Heart left ventricle (tissue), 16 donors: ENCODE measurements at regions of chr22 and their contacts with region 1.

Region 1: GRCh38 chr22:30634471-30635233 is 929 bp upstream of the SLC35E4 start:
- DNase-seq: peak; percentile 83 to 93 (median 85)
- ATAC-seq: peak; percentile 65 to 82 (median 74)
- H3K4me3 ChIP-seq: peak overlapping the region in 11 of 12 donors; percentile 6 to 90 (median 77)
- H3K27ac ChIP-seq: peak overlapping the region; percentile 23 to 98 (median 88)
- H3K4me1 ChIP-seq: peaks cover 0 to 37% (median 27%) of the 10 kb centered on the region in 12 donors
- H3K27me3 ChIP-seq: no peaks in the 10 kb centered on the region
- CTCF ChIP-seq: peak; percentile 91 to 96 (median 94)
- POLR2A ChIP-seq: no peak

Region 2: DNA sequence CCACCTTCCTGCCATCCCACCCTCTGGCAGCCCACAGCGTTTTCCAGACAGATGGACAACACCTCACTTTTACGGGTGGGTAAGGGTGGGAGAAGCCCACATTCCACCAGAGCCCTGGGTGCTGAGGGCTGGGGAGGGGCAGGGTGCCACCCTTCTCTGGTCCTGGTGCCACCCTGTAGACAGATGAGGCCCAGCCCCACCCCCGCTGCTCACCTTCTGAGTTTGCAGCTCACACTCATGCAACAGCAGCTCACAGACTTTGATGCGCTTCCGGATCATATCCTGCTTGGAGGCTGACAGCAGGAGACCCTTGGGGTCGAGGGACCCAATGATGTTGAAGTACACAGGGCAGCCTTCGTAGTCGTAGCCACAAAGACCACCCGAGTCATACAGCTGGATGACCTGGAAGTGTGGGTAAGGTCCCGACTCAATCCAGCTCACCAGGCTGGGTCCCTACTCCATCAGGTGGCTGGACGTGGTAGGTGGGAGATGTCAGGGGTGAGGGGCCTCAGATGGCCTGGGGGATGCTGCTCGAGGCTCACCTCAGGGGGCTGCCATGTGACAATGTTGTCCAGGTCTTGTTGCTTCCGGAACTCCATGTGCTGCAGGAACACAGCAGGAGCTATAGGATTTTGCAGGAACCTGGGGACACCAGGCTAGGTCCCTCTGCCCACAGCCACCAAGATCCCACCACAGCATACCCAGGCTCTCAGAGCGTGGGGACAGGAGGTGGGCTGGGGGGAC is 139.4 kb before region 1 on chr22:
- intact Hi-C with region 1: no loop called
- DNase-seq: peak in 1 of 5 donors; percentile 46
- ATAC-seq: no peak
- H3K4me3 ChIP-seq: no peak overlapping the region
- H3K27ac ChIP-seq: no peak overlapping the region
- H3K4me1 ChIP-seq: no peaks in the 10 kb centered on the region
- H3K27me3 ChIP-seq: peaks cover 0 to 20% (median 0%) of the 10 kb centered on the region in 9 donors
- CTCF ChIP-seq: no peak
- POLR2A ChIP-seq: no peak

Region 3: GRCh38 chr22:30591588-30592359 is 42.9 kb before region 1 on chr22 and contains the start of gene PES1:
- intact Hi-C with region 1: loop called in 1 of 10 experiments (anchors 2 kb)
- DNase-seq: peak; percentile 94 to 97 (median 96)
- ATAC-seq: peak; percentile 100
- H3K4me3 ChIP-seq: peak within 1 kb of the TSS; percentile 59 to 95 (median 82)
- H3K27ac ChIP-seq: peak within 1 kb of the TSS; percentile 43 to 91 (median 81)
- H3K4me1 ChIP-seq: peaks cover 0 to 23% (median 15%) of the 10 kb centered on the region in 12 donors
- H3K27me3 ChIP-seq: no peaks in the 10 kb centered on the region
- CTCF ChIP-seq: no peak
- POLR2A ChIP-seq: peak in 1 of 2 donors; percentile 45
- total RNA-seq, gene PES1: 15.7 to 39.8 (median 27.8) TPM

Region 4: GRCh38 chr22:30675436-30675835 is 40.8 kb after region 1 on chr22:
- intact Hi-C with region 1: loop called in 2 of 10 experiments (anchors 5 kb)
- DNase-seq: no peak
- ATAC-seq: no peak
- H3K4me3 ChIP-seq: no peak overlapping the region
- H3K27ac ChIP-seq: no peak overlapping the region
- H3K4me1 ChIP-seq: peaks cover 0 to 1% (median 0%) of the 10 kb centered on the region in 12 donors
- H3K27me3 ChIP-seq: peaks cover 0 to 14% (median 0%) of the 10 kb centered on the region in 9 donors
- CTCF ChIP-seq: no peak
- POLR2A ChIP-seq: no peak

Region 5: GRCh38 chr22:30754971-30755756 is 120.5 kb after region 1 on chr22:
- intact Hi-C with region 1: loop called (anchors 1 to 2 kb)
- DNase-seq: peak in 4 of 5 donors; percentile 36 to 45 (median 41)
- ATAC-seq: peak; percentile 63 to 87 (median 79)
- H3K4me3 ChIP-seq: no peak overlapping the region
- H3K27ac ChIP-seq: no peak overlapping the region
- H3K4me1 ChIP-seq: peaks cover 0 to 3% (median 0%) of the 10 kb centered on the region in 12 donors
- H3K27me3 ChIP-seq: no peaks in the 10 kb centered on the region
- CTCF ChIP-seq: peak; percentile 38 to 71 (median 60)
- POLR2A ChIP-seq: no peak

Region 6: DNA sequence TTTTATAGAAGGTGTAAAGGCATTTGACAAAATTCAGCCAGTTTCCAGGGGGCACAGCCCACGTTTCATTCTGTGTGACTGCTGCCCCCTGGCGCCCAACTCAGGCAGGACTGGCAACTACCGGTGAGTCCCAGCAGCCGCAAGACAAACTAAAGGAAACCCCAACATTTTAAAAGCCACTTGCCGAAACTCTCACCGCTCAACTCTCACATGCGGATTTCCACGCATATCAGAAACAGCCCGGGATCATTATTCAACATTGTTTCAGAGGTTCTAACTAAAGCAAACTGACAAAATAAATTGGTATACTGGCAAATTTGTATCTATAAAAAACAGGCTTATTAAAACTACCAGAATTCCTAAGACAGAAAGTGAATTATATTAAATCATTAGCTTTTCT is 285.8 kb after region 1 on chr22:
- intact Hi-C with region 1: loop called in 9 of 10 experiments (anchors 1 to 10 kb)
- DNase-seq: peak; percentile 67 to 88 (median 75)
- ATAC-seq: peak in 3 of 4 donors; percentile 63 to 65 (median 64)
- H3K4me3 ChIP-seq: peak overlapping the region in 4 of 12 donors; percentile 2 to 60 (median 17)
- H3K27ac ChIP-seq: no peak overlapping the region
- H3K4me1 ChIP-seq: peaks cover 0 to 24% (median 7%) of the 10 kb centered on the region in 12 donors
- H3K27me3 ChIP-seq: no peaks in the 10 kb centered on the region
- CTCF ChIP-seq: peak; percentile 87 to 98 (median 91)
- POLR2A ChIP-seq: no peak